Activated CD8-positive, alpha-beta memory T cell treated with anti-CD3 and anti-CD28 coated beads, Interleukin-2, amount 10 ng/mL, durations not matched to agents 7 days and 5 days (primary cell): ENCODE measurements at regions of chr14 and their contacts with region 1.

Region 1: GRCh38 chr14:74945823-74946682 is 9.3 kb downstream of the PGF start:
- DNase-seq: peak; percentile 87
- ATAC-seq: peak; percentile 78
- H3K4me3 Mint-ChIP-seq: peak overlapping the region; percentile 18
- H3K27ac Mint-ChIP-seq: no peak overlapping the region
- H3K4me1 Mint-ChIP-seq: peaks cover 22% of the 10 kb centered on the region
- H3K27me3 Mint-ChIP-seq: no peaks in the 10 kb centered on the region

Region 2: GRCh38 chr14:74905375-74906142 is 40.5 kb before region 1 on chr14:
- CTCF ChIA-PET with region 1: interaction called, 23 read pairs
- DNase-seq: peak; percentile 80
- ATAC-seq: peak; percentile 80
- H3K4me3 Mint-ChIP-seq: no peak overlapping the region
- H3K27ac Mint-ChIP-seq: peak overlapping the region; percentile 56
- H3K4me1 Mint-ChIP-seq: no peaks in the 10 kb centered on the region
- H3K27me3 Mint-ChIP-seq: no peaks in the 10 kb centered on the region

Region 3: GRCh38 chr14:74973003-74973653 is 27.1 kb after region 1 on chr14:
- CTCF ChIA-PET with region 1: interaction called, 20 read pairs
- DNase-seq: peak; percentile 72
- ATAC-seq: peak; percentile 94
- H3K4me3 Mint-ChIP-seq: no peak overlapping the region
- H3K27ac Mint-ChIP-seq: no peak overlapping the region
- H3K4me1 Mint-ChIP-seq: peaks cover 9% of the 10 kb centered on the region
- H3K27me3 Mint-ChIP-seq: peaks cover 4% of the 10 kb centered on the region

Region 4: GRCh38 chr14:75022655-75023054 is 76.6 kb after region 1 on chr14:
- CTCF ChIA-PET with region 1: interaction called, 15 read pairs
- DNase-seq: no peak
- ATAC-seq: peak; percentile 45
- H3K4me3 Mint-ChIP-seq: no peak overlapping the region
- H3K27ac Mint-ChIP-seq: no peak overlapping the region
- H3K4me1 Mint-ChIP-seq: no peaks in the 10 kb centered on the region
- H3K27me3 Mint-ChIP-seq: no peaks in the 10 kb centered on the region

Region 5: DNA sequence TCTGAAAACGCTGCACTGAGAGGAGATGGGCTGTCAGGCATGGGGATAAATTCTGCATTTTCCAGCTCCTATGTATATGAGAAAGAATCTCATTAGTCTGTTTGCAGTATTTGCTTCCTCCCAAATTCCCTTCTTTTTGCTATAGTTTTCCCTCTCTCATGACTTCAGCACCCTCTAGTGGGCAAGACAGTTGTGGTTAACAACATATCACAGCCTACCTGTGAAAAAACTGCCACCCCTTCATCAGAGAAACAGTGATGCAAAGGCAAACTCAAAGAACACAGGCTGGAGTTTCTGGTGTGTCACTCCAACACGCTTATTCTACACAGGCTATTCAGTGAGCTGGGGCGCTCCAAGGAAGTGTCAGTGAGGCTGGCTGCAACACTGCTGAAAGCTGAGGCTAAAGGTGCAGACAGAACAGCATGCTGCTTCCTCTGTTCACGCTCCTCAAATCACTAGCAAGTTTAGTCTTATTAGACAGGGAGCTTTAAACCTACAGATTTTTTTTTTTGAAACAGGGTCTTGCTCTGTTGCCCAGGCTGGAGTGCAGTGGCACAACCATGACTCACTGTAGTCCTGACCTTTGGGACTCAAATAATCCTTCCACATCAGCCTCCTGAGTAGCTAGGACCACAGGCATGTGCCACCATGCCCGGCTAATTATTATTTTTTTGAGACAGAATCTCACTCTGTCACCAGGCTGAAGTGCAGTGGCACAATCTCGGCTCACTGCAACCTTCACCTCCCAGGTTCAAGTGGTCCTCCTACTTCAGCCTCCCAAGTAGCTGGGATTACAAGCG is 142.7 kb after region 1 on chr14:
- CTCF ChIA-PET with region 1: interaction called, 86 read pairs
- DNase-seq: peak; percentile 57
- ATAC-seq: peak; percentile 66
- H3K4me3 Mint-ChIP-seq: no peak overlapping the region
- H3K27ac Mint-ChIP-seq: peak overlapping the region; percentile 40
- H3K4me1 Mint-ChIP-seq: no peaks in the 10 kb centered on the region
- H3K27me3 Mint-ChIP-seq: no peaks in the 10 kb centered on the region

Region 6: GRCh38 chr14:75205591-75205990 is 259.5 kb after region 1 on chr14:
- CTCF ChIA-PET with region 1: no interaction called
- DNase-seq: peak; percentile 52
- ATAC-seq: peak; percentile 74
- H3K4me3 Mint-ChIP-seq: no peak overlapping the region
- H3K27ac Mint-ChIP-seq: peak overlapping the region; percentile 77
- H3K4me1 Mint-ChIP-seq: peaks cover 24% of the 10 kb centered on the region
- H3K27me3 Mint-ChIP-seq: peaks cover 8% of the 10 kb centered on the region